Posterior vena cava (tissue), 2 donors: ENCODE measurements at regions of chr10 and their contacts with region 1.

Region 1: GRCh38 chr10:102841827-102842345 is 4.7 kb upstream of the CYP17A1 start:
- DNase-seq: no peak

Region 2: GRCh38 chr10:103069453-103070331 is 227.8 kb after region 1 on chr10:
- intact Hi-C with region 1: loop called in 1 of 2 experiments (anchors 10 kb)
- DNase-seq: no peak

Region 3: GRCh38 chr10:103096153-103096552 is 254.3 kb after region 1 on chr10:
- intact Hi-C with region 1: no loop called
- DNase-seq: no peak

Region 4: GRCh38 chr10:104479906-104480593 is 1638.2 kb after region 1 on chr10:
- intact Hi-C with region 1: no loop called
- DNase-seq: peak; percentile 89